Caki2 (cell line): ENCODE measurements at regions of chr20 and their contacts with region 1.

Region 1: DNA sequence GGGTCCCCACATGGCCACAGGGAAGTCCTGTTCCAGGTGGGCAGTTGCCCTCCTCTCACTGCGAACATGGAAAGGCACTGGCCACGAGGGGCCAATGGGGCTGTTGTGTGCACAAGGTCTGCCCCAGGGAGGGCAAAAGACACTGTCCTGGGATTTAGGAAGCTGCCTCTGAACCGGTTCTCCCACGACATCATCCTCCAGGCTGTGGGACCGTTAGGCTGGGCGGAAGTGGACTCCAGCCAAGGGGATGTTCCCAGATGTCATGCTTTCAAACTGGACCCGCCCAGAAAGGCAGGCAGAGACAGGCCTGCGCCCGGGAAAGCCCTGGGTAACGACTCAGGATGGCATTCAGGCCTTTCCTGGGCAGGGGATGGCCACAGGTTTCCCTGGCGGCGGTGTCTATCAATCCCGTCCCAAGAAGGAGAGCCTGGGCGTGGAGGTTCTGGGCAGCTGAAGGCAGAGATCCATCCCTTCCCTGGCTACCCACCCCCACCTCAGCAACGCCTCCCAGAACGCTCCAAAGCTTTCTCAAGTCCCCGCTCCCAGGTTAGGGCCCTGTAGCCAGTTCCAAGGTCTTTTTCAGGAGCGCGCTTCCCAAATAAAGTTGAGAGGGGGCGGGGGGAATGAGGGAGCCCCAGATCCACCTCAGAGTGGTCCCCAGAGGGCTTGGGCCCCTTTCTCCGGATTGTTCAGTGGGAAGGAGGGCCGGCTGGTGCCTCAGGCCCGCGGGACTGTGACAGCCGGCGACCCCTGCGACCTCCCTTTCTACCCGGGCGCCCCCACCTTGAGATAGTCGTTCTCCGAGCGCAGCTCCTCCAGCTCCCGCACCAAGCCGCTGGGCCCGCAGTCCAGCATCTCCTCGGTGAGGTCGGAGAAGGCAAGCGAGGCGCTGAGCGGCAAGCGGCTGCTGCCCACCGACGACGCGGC is 13.8 kb upstream of the TLDC2 start:
- DNase-seq: peak; percentile 93

Region 2: GRCh38 chr20:36573103-36573794 is 288.9 kb before region 1 on chr20 and contains the start of gene TGIF2:
- in situ Hi-C with region 1: no loop called
- DNase-seq: peak; percentile 88
- total RNA-seq, gene TGIF2: 3.4 and 8.2 TPM in 2 replicates

Region 3: DNA sequence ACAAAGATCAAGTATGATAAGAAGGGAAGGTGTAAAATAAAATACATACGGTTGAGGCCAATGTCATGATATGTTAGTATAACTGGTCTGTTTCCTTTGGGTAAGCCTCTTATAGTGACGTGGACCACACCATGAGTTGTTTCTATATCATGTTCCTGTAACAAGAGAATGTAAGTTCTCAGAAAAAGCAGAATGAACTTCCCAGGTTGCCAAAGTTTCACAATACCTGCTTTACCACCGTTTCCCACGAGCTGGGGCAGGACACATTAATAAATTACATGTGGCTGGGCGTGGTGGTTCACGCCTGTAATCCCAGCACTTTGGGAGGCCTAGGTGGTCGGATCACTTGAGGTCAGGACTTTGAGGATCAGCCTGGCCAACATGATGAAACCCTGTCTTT is 173.5 kb before region 1 on chr20:
- in situ Hi-C with region 1: no loop called
- DNase-seq: no peak

Region 4: GRCh38 chr20:36773597-36774390 is 88.3 kb before region 1 on chr20 and contains the start of gene DSN1:
- in situ Hi-C with region 1: loop called (anchors 25 kb)
- DNase-seq: peak; percentile 97
- total RNA-seq, gene DSN1: 64.7 and 69.7 TPM in 2 replicates

Region 5: GRCh38 chr20:36932476-36933426 is 70.6 kb after region 1 on chr20:
- in situ Hi-C with region 1: no loop called
- DNase-seq: no peak